Psoas muscle (tissue), 8 donors: ENCODE measurements at regions of chr16 and their contacts with region 1.

Region 1: DNA sequence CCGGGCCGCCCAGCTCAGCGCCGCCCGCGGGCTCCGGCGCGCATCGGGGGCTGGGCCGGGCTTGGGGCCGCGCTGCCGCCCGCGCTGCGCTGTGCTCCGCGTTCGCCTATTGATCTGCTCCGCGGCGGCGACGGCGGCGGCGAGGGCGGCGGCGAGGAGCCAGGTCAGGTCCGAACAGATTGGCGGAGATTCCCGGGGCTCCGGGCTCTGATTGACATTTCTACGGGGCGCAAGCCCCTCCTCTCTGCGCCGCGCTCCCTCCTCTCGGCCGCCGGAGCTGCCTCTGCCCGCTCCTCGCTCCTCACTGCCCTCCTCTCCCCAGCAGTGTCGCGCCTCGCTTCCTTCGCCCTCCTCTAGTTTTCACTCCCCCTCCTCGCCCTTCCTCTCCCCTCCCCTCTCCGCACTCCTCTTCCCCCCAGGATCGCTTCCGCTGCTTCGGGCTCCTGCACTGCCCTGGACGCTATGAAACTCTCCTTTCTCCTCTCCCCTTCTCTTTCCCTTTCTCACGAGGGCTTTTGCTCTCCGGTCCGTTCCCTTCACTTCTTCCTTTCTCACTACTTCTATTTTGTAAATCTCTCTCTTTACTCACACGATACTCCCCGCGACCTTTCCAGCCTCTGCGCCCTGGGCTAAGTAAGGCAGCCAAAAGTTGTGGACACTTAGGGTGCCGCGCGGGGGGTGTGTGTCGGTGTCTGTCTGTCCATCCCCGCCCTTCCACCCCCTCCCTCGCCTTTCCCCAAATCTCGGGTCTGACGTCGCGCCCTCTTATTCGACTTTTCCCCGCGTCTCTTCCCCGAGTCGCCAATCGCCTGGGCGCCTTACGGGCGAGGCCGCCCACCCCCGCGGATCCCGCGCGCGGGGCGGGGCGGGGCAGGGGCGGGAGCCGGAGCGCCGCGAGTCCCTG is at the start of gene IRX3:
- DNase-seq: peak; percentile 69 to 93
- ATAC-seq: peak; percentile 76 to 86 (median 82)
- H3K4me3 ChIP-seq: peak within 1 kb of the TSS; percentile 78
- H3K27ac ChIP-seq: peak within 1 kb of the TSS; percentile 76
- H3K4me1 ChIP-seq: no peaks in the 10 kb centered on the region
- H3K27me3 ChIP-seq: peaks cover 0 to 57% (median 0%) of the 10 kb centered on the region in 3 donors
- CTCF ChIP-seq: no peak
- total RNA-seq, gene IRX3: 1.2 to 27.6 (median 5.7) TPM

Region 2: DNA sequence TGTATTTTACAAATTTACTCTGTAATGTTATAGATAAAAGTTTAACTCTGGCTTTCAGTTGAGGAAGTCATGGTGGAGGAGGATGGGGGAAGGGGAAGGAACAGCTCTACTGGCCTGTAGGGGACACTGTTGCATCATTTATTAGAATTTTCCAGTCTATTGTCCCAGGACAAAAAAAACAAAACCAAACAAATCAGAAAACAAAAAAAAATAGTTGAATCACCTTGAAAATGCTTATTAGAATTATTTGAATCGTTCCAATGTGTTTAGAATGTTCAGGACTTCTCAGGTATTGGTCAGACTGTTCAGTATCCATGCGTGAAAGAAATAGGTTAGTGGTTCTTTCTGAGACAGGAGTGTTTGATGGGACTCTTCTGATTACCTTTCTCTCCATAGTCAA is 340.3 kb before region 1 on chr16:
- intact Hi-C with region 1: loop called in 1 of 2 experiments (anchors 10 kb)
- DNase-seq: no peak
- ATAC-seq: peak; percentile 69 to 93 (median 80)
- H3K4me3 ChIP-seq: no peak overlapping the region
- H3K27ac ChIP-seq: no peak overlapping the region
- H3K4me1 ChIP-seq: peaks cover 14% of the 10 kb centered on the region
- H3K27me3 ChIP-seq: no peaks in the 10 kb centered on the region
- CTCF ChIP-seq: peak; percentile 79

Region 3: DNA sequence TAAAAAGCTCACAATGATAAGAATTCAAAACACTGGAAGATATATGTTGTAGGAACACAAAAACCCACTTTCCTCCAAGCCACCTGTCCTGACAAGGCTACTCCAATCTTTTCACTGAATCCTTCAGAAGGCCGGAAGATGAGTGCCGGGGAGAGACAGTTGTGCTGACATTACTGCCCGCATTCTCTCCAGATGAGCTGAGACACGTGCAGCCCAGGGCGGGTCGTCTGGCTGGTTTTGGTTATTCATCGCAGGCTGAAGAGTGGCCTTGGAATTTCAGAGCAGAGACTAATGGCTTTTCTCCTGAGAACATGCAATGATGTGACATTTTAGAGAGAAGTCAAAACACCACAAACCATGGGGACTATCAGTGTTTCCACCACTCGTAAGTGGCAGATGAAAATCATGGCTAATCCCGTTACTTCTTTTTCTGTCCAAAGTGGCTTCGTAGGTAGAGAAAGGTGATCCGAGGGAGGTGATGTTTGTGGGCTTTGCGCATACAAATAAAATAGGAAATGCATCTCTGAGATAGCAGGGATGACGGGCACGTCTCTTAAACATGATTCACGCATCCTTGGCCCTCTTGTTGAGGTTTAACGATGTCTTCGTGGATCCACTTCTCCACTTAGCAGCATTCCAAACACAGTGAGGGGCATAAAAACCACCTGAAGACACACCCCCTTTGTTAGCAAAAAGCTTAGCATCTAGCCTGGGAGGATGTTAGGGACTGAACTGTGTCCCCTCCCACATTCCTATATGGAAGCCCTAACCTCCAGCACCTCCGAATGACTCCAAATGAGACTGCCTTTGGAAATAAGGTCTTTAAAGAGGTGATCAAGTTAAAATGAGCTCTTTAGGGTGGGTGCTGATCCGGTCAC is 133.7 kb before region 1 on chr16:
- intact Hi-C with region 1: no loop called
- DNase-seq: no peak
- ATAC-seq: no peak
- H3K4me3 ChIP-seq: no peak overlapping the region
- H3K27ac ChIP-seq: no peak overlapping the region
- H3K4me1 ChIP-seq: no peaks in the 10 kb centered on the region
- H3K27me3 ChIP-seq: no peaks in the 10 kb centered on the region
- CTCF ChIP-seq: no peak